ENCODE measurements at regions of chr17 and their contacts with region 1.

Region 1: DNA sequence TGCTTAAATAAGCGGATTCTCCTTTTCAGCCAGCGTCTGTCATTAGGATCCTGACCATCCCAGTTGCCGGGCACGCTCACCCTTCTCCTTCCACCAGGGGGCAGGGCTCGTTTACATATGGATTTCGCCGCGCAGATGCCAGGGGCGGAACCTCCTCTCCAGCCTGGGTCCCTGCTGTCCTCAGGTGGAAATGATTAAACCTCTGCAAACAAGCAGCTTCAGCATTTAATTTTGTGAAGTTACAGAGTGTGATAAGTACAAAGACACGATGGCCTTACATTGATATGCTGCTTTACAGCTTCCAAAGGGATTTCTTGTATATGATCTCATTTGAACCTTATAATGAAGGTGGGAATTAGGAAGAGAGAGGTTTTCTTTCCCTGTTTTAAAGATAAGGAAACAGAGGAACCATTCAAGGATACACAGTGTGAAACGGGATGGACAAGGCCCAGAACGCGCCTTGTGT is 3.9 kb upstream of the KRT28 start:
- DNase-seq: peak; percentile 91
- H3K4me3 Mint-ChIP-seq: no peak overlapping the region
- H3K27ac Mint-ChIP-seq: no peak overlapping the region
- H3K4me1 Mint-ChIP-seq: peaks cover 2% of the 10 kb centered on the region
- H3K27me3 Mint-ChIP-seq: peaks cover 44% of the 10 kb centered on the region

Region 2: GRCh38 chr17:40775945-40776344 is 27.7 kb before region 1 on chr17:
- intact Hi-C with region 1: no loop called
- DNase-seq: no peak
- H3K4me3 Mint-ChIP-seq: no peak overlapping the region
- H3K27ac Mint-ChIP-seq: no peak overlapping the region
- H3K4me1 Mint-ChIP-seq: no peaks in the 10 kb centered on the region
- H3K27me3 Mint-ChIP-seq: peaks cover 58% of the 10 kb centered on the region

Region 3: DNA sequence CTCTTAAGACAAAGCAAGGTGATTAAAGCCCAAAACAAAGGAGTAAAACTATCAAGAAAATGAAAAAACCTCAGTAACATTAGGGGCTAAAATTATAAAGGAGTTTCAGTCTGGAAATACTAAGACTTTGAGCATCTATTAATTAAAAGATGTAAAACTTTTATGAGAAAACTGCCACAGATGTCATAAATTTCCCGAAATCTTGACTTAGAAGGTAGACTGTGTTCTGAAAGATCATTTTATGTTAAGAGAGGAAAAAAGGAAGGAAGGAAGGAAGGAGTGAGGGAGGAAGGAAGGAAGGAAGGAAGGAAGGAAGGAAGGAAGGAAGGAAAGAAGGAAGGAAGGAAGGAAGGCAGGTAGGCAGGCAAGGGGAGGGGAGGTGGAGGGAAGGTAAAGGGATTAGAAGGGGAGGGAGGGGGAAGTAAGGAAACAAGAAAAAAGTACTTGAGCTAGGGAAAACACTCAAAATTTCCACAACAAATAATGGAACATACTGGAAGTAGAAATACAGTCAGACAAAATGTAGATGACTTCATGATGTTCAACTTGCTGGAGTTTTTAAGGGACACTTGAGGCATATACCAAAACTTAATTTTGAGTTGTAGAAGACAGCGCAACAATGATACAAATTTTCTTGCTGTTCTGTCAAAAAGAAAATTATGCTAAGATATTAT is 344.0 kb after region 1 on chr17:
- intact Hi-C with region 1: no loop called
- DNase-seq: no peak
- H3K4me3 Mint-ChIP-seq: no peak overlapping the region
- H3K27ac Mint-ChIP-seq: no peak overlapping the region
- H3K4me1 Mint-ChIP-seq: no peaks in the 10 kb centered on the region
- H3K27me3 Mint-ChIP-seq: no peaks in the 10 kb centered on the region

Region 4: DNA sequence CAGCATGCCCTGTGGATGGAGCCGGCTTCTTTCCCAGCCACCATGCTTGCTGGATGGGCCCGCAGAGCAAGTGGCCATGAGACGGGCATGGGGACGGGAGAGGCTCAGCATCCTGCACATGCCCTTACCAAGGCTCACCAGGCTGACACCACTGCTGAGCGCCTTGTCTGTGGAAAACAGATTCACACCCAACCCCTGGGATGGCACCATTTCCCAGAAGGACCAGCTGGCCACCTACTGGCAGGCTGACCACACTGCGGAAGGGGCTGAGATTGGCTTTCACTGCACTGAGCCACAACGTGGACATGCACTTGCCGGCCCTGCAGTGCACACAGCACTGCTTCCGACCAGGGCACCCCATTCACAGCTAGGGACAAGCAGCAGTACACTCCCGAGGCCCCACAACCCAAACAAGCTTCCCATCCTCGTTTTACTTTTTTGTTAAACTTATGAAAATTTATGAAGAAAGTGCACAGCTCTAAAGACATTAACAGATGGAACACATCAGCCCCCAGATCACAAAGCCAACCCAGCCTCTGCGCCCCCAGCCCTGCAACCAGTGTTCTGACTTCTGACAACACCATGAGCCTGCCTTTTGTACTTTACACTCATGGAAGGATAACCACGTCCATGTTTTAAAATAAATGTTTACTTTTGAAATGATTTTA is 525.8 kb after region 1 on chr17:
- intact Hi-C with region 1: loop called (anchors 5 kb)
- DNase-seq: peak; percentile 71
- H3K4me3 Mint-ChIP-seq: no peak overlapping the region
- H3K27ac Mint-ChIP-seq: no peak overlapping the region
- H3K4me1 Mint-ChIP-seq: no peaks in the 10 kb centered on the region
- H3K27me3 Mint-ChIP-seq: peaks cover 3% of the 10 kb centered on the region

Region 5: DNA sequence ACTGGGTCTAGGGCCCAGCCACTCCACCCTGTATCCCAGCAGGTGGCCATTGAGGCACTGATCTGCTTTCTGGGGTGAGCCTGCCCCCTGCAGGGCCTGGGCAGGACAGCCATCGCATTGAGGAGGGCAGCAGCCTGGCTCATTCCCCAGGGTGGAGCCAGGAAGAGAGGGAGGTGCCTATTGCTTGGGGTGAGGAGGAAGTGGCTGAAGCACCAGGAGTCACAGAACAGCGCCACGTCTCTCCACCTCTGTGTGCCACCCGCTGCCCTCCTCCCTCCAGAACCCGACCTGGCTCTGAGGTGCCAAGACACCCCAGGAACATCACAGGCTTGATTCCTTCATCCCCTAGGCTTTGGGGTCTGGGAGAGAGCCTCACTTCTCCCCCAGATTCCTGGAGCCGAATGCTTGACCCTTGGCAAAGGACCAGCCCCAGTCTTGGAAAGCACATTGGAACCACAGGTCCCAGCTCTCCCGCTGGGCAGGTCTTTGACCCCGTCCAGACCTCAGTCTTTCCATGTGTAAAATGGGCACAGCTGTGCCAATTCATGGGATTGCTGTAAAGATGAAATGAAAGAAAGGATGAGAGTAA is 693.3 kb after region 1 on chr17:
- intact Hi-C with region 1: loop called (anchors 2 kb)
- DNase-seq: peak; percentile 91
- H3K4me3 Mint-ChIP-seq: peak overlapping the region; percentile 17
- H3K27ac Mint-ChIP-seq: peak overlapping the region; percentile 30
- H3K4me1 Mint-ChIP-seq: peaks cover 13% of the 10 kb centered on the region
- H3K27me3 Mint-ChIP-seq: peaks cover 4% of the 10 kb centered on the region

Region 6: DNA sequence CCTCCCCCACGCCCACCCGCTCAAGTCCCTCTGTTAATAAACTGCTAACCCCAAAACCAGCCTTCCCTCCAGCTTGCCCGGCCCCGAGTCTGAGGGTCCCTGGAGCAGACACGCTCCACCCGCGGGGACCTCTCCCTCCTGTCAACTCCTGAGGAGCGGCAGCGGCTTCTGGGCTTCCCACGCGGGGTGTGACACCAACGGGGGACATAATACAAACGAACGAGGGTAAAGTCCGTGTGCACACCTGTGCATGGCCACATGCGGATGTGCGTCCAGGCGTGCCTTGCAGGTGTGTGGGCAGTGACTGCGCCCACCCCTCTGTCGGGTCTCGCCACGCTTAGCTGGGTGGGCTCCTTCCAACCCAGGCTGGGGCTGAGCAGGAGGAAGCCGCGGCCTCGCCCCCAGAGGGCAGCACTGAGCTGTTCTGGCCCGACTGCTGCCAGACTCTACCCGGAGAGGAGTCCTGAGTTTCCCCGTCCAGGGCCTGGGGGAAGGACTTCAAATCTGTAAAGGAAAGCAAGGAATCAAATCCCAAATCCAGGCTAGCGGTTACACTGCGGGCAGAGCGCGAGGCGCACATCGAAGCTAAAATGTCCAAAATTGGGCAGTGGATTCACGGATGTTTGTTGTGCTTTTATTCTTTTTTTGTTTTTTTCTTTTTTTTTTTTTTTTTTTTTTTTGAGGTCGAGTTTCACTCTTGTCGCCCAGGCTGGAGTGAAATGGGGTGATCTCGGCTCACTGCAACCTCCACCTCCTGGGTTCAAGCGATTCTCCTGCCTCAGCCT is 845.0 kb after region 1 on chr17:
- intact Hi-C with region 1: loop called (anchors 1 kb)
- DNase-seq: peak; percentile 96
- H3K4me3 Mint-ChIP-seq: peak overlapping the region; percentile 76
- H3K27ac Mint-ChIP-seq: peak overlapping the region; percentile 23
- H3K4me1 Mint-ChIP-seq: peaks cover 7% of the 10 kb centered on the region
- H3K27me3 Mint-ChIP-seq: peaks cover 1% of the 10 kb centered on the region

Measured in activated CD4-positive, alpha-beta T cell treated with anti-CD3 and anti-CD28 coated beads, Interleukin-2, amount 10 ng/mL, durations not matched to agents 24 days and 14 days (primary cell).